MCF 10A (cell line): ENCODE measurements at regions of chr10 and their contacts with region 1.

Region 1: DNA sequence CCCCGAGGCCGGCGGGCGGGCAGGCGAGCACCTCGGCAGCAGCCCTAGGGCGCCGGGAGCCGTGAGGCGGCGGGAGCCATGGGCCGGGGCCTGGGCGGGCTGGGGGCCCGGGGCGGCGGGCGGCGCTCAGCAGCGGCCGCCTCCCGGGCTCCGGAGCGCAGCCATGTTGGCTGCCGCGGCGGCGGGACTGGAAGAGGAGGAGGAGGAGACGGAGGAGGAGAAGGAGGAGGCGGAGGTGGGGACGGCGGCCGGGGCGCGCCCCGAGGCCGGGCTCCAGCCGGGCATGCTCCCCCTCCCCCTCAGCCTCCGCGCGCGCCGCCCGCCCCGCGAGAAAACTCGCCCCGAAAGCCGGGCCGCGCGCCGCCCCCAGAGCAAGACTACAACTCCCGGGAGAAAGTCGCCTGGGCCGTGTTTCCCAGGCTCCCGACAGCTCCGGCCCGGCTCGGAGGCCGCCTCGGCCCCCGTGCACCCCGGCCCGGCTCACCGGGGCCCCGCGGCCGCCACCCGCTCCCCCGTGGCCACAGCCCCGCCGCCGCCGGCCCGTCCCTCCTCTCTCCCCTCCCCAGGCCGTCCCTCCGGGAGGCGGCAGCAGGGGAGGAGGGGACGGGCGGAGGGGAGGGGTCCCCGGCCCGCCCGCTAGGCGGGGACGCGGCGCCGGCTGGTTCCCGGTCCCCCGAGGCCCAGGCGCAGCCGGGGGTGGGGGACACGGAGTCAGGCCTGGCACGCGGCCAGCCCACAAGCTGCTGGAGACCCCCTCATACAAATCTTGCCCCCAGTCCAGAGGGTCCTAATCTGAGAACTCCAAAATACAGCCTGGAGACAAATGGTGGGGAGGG is at the start of gene DLG5:
- DNase-seq: peak; percentile 61
- H3K4me3 Mint-ChIP-seq: peak within 1 kb of the TSS; percentile 90
- H3K27ac Mint-ChIP-seq: peak within 1 kb of the TSS; percentile 80
- H3K4me1 Mint-ChIP-seq: peaks cover 29% of the 10 kb centered on the region
- H3K27me3 Mint-ChIP-seq: no peaks in the 10 kb centered on the region
- CTCF ChIP-seq: no peak
- total RNA-seq, gene DLG5: 126 and 127 TPM in 2 replicates

Region 2: GRCh38 chr10:77774940-77775391 is 151.8 kb before region 1 on chr10:
- CTCF ChIA-PET with region 1: no interaction called
- POLR2A ChIA-PET with region 1: no interaction called
- intact Hi-C with region 1: no loop called
- DNase-seq: no peak
- H3K4me3 Mint-ChIP-seq: no peak overlapping the region
- H3K27ac Mint-ChIP-seq: no peak overlapping the region
- H3K4me1 Mint-ChIP-seq: peaks cover 9% of the 10 kb centered on the region
- H3K27me3 Mint-ChIP-seq: no peaks in the 10 kb centered on the region
- CTCF ChIP-seq: no peak

Region 3: DNA sequence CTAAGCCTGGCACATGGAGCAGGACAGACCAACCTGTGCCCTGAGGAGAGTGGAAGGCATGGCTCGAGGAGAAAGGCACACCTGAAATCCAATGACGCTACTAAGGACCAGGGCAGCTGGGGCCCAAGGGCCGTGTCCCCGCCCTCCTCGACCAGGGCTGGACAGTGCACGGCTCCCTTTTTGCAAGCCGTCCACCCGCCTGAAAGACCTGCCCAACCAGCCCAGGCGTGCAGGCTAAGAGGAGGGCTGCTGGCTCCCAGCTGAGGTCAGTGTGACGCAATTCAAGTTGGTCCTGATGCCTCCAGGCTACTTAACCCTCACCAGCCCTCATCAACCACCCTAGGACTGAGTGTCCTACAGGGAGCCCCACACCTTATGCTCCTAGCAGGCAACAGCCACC is 69.5 kb before region 1 on chr10:
- CTCF ChIA-PET with region 1: interaction called, 7 read pairs
- POLR2A ChIA-PET with region 1: interaction called, 39 read pairs
- intact Hi-C with region 1: no loop called
- DNase-seq: peak; percentile 86
- H3K4me3 Mint-ChIP-seq: peak overlapping the region; percentile 61
- H3K27ac Mint-ChIP-seq: peak overlapping the region; percentile 85
- H3K4me1 Mint-ChIP-seq: peaks cover 32% of the 10 kb centered on the region
- H3K27me3 Mint-ChIP-seq: no peaks in the 10 kb centered on the region
- CTCF ChIP-seq: no peak

Region 4: DNA sequence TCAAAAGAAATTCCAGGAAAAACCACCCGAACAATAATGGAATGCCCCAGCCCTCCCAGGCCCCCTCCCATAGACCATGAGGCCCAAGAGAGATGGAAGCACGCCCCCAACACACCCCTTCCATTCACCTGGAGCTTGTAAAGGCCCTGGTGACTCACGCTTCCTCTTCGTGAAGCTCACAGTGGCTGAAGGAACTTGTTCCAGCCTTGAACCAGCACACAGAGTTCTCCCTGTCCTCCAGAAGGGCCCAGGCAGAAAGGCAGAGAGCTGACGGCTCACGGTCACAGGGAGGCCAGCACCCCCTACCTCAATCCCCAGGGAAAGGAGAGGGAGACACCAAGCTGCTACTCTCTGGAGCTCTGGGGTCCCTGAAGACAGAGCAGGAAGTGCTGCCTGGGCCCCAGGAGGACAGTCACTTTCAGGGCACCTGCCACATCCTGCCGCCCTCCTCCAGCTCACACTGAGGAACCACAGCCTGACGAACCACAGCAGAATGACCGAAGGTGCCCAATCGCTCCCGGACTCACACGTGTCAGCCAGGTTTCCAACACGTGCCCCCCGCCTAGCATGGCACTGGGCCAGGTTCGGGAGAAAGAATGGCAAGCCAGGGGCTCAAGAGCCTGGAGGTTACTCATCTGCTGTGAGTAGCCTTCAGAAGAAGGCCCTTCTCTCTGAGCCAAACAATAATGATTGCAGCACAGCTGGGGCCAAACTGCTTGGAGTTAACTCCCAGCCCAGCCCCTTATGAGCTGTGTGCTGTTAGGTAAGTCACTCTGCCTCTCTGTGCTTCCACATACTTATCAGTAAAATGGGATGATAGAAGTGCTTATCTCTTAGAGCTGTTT is 53.0 kb before region 1 on chr10:
- CTCF ChIA-PET with region 1: interaction called, 5 read pairs
- POLR2A ChIA-PET with region 1: interaction called, 79 read pairs
- intact Hi-C with region 1: loop called (anchors 10 kb)
- DNase-seq: peak; percentile 98
- H3K4me3 Mint-ChIP-seq: peak overlapping the region; percentile 63
- H3K27ac Mint-ChIP-seq: peak overlapping the region; percentile 85
- H3K4me1 Mint-ChIP-seq: peaks cover 71% of the 10 kb centered on the region
- H3K27me3 Mint-ChIP-seq: no peaks in the 10 kb centered on the region
- CTCF ChIP-seq: no peak

Region 5: DNA sequence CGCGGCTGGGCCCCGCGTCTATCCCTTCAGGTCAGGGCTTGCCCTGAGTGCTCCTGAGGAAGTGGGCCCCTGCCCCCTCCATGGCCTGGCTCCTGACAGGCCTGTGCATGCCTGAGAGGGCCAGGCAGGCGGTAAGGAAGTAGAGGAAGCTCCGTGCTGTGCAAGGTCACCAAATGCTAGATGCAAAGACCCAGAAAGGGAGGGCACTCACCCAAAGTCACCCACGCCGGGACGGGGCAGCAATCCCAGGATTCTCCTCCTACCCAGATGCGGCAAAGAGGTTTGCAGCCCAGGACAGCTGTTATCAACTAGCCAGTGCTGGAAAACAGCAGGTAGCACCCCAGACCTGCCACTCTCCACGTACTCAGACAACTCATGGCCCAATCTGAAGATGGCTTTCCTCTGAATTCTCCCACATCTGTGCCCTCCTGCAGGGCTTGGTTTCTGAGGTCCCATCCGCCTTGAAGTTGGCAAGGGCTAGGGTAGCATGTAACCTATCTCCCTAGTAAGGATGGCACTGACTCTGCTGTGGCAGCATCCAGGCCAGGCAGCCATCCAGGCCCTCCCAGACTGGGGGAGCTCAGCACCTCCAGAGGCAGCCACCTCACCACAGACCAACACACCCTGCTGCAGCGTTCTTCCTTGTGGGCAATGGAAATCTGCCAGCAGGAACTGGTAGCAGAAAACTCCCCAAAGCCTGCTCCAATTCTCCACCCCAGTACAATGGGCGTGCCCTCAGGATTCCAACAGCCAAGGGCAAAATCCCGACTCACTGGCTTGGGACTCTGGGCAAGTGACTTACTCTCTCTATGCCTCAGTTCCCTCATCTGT is 27.9 kb before region 1 on chr10:
- CTCF ChIA-PET with region 1: interaction called, 6 read pairs
- POLR2A ChIA-PET with region 1: interaction called, 43 read pairs
- intact Hi-C with region 1: no loop called
- DNase-seq: peak; percentile 97
- H3K4me3 Mint-ChIP-seq: peak overlapping the region; percentile 75
- H3K27ac Mint-ChIP-seq: peak overlapping the region; percentile 87
- H3K4me1 Mint-ChIP-seq: peaks cover 55% of the 10 kb centered on the region
- H3K27me3 Mint-ChIP-seq: no peaks in the 10 kb centered on the region
- CTCF ChIP-seq: no peak

Region 6: DNA sequence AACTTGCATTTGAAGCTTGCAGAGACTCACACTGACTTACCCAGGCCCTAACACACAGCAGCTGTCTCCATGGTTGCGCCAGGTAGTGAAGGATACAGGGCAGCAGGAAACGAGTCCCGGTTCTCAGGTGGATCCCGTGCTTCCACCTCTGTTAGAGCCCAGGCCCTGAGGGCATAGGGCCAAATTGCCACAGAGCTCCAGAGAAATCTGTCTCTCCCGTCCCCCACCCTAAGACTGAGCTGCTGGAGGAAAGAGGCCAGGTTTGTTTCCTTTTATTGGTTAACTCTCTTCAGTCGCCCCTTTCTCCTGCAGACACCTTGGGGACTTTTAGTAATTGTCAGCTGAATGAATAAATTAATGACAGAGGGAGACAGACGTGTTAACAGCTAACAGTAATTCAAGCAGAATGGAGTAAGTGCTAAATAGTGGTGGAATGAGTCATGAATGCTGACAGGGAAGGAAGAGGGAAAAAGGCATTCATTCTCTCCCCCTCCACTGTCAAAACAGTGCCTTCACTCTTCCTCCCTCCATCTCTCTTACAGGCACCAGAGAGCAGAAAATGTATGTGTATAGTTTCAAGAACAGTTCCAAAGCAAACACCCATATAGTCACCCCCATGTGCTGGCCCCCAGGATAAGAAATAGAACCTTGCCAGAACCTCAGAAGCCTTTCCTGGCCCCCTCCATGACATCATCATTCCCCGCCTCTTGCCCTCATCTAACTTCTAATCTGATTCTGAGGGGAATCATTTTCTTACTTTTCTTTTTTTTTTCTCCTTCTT is 16.5 kb after region 1 on chr10:
- CTCF ChIA-PET with region 1: interaction called, 4 read pairs
- POLR2A ChIA-PET with region 1: interaction called, 23 read pairs
- intact Hi-C with region 1: no loop called
- DNase-seq: peak; percentile 90
- H3K4me3 Mint-ChIP-seq: peak overlapping the region; percentile 50
- H3K27ac Mint-ChIP-seq: peak overlapping the region; percentile 95
- H3K4me1 Mint-ChIP-seq: peaks cover 43% of the 10 kb centered on the region
- H3K27me3 Mint-ChIP-seq: no peaks in the 10 kb centered on the region
- CTCF ChIP-seq: no peak

Region 7: GRCh38 chr10:77970869-77971803 is 44.4 kb after region 1 on chr10:
- CTCF ChIA-PET with region 1: interaction called, 3 read pairs
- POLR2A ChIA-PET with region 1: interaction called, 8 read pairs
- intact Hi-C with region 1: loop called (anchors 5 kb)
- DNase-seq: peak; percentile 89
- H3K4me3 Mint-ChIP-seq: no peak overlapping the region
- H3K27ac Mint-ChIP-seq: peak overlapping the region; percentile 49
- H3K4me1 Mint-ChIP-seq: peaks cover 14% of the 10 kb centered on the region
- H3K27me3 Mint-ChIP-seq: no peaks in the 10 kb centered on the region
- CTCF ChIP-seq: no peak